ENCODE measurements at regions of chr1 and their contacts with region 1.

Region 1: GRCh38 chr1:181424786-181425403 is 58.4 kb upstream of the CACNA1E start:
- DNase-seq: peak; percentile 70
- CTCF ChIP-seq: peak; percentile 95

Region 2: DNA sequence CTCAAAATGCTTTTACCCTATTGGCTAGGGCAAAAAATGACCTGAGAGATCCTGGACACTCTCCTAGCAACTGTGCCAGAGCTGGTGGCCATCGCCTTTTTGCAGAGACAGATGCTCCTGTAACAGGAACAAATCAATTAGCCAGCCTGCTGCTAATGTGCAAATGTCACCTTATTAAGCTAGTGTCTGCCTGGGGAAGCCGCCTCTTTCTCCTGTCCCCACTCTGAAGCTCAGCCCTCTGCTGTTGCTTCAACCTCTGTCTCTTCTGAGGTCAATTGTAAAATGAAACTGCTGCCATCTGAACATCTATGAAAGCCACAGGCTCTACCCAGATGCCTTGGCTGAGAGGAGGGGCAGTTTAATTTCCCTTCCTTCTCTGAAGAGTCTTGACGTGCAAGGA is 27.1 kb before region 1 on chr1:
- CTCF ChIA-PET with region 1: interaction called, 53 read pairs
- POLR2A ChIA-PET with region 1: interaction called, 3 read pairs
- DNase-seq: peak; percentile 54
- CTCF ChIP-seq: no peak

Region 3: DNA sequence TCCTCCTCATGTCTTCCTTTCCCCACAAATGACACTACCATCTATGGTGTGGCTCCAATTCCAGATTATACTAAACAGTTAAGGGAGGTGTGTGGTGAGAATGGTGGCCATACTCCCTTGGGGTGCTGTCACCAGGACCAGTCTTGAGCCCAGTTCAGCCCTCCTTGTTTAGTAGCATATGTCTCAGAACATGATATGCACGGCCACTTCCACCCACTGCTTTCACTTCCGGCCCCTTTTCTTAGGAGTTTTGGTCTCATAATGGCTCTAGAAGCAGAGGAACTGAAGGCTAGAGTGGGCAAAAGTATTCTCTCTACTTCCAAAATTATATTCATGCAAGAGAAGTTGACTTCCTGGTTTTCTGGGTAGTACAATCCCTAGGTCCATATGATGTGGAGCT is 13.1 kb after region 1 on chr1:
- CTCF ChIA-PET with region 1: interaction called, 40 read pairs
- POLR2A ChIA-PET with region 1: no interaction called
- DNase-seq: no peak
- CTCF ChIP-seq: no peak

Region 4: GRCh38 chr1:181452754-181453153 is 27.9 kb after region 1 on chr1:
- CTCF ChIA-PET with region 1: interaction called, 36 read pairs
- POLR2A ChIA-PET with region 1: no interaction called
- DNase-seq: no peak
- CTCF ChIP-seq: no peak

Region 5: GRCh38 chr1:181936768-181937581 is 512.1 kb after region 1 on chr1:
- CTCF ChIA-PET with region 1: interaction called, 16 read pairs
- POLR2A ChIA-PET with region 1: no interaction called
- DNase-seq: peak; percentile 75
- CTCF ChIP-seq: peak; percentile 72

Measured in GM10248 (cell line).